Gastrocnemius medialis (tissue), 4 donors: ENCODE measurements at regions of chr21 and their contacts with region 1.

Region 1: GRCh38 chr21:34908419-34909055 is 140.6 kb downstream of the RUNX1 start:
- DNase-seq: peak in 1 of 2 donors; percentile 9
- ATAC-seq: no peak
- H3K4me3 ChIP-seq: no peak overlapping the region
- H3K27ac ChIP-seq: no peak overlapping the region
- H3K4me1 ChIP-seq: no peaks in the 10 kb centered on the region
- H3K27me3 ChIP-seq: no peaks in the 10 kb centered on the region
- CTCF ChIP-seq: no peak
- POLR2A ChIP-seq: no peak

Region 2: DNA sequence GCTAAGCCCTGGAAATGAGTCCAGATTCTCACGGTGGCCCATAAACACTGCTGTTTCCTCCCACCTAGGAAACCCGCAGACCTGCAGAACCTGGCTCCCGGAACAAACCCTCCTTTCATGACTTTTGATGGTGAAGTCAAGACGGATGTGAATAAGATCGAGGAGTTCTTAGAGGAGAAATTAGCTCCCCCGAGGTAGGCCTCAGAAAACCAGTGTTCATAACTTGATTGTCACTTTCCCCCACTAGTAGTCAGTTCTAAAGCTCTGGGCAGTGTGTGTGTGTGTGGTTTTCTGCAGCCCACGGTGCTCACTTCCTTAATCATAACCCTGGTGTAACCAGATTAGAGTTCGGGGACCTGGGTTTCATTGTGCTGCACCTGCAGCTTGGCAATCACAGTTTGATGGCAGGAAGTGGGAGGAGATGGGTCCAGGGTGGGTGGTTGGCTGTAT is 200.6 kb before region 1 on chr21:
- in situ Hi-C with region 1: no loop called
- intact Hi-C with region 1: no loop called
- DNase-seq: no peak
- ATAC-seq: no peak
- H3K4me3 ChIP-seq: no peak overlapping the region
- H3K27ac ChIP-seq: no peak overlapping the region
- H3K4me1 ChIP-seq: no peaks in the 10 kb centered on the region
- H3K27me3 ChIP-seq: no peaks in the 10 kb centered on the region
- CTCF ChIP-seq: no peak
- POLR2A ChIP-seq: no peak

Region 3: DNA sequence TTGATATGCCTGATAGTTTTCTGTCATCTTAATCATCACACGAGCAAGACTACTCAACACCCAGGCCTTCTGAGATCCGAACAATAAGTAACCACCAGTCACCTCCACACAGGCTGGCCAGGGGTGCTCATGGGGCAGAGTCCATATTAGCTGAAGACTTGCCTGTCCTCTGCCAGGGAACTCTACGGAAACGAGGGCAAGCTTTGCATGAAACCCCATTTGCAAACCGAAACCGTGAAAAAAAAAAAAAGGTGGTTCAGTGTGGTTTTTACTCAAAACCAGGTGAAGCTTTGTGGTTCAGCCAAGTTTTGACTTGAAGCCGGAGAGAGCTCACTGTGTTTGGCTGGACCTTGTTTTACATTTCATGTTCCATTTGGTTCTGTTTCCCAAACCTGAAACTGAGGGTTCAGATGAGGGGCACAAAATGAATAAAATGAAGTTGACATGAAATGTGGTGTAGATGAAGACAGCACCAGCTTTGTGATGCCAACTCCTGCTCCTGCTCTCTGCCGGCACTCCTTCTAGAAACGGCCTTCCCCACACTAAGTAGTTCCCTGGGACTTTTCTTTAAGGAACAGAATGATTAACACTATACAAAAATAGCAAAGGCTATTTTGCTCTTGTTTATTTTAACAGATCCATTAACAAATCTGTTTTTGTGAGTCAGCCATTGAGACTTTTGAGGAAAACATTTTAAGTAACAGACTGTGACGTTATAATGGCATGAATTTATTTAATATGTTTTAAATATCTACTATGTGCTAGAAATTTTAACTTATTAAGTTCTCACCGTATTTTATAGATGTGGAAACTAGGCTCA is 65.8 kb after region 1 on chr21:
- in situ Hi-C with region 1: loop called in 1 of 4 experiments (anchors 10 kb)
- intact Hi-C with region 1: no loop called
- DNase-seq: no peak
- ATAC-seq: no peak
- H3K4me3 ChIP-seq: no peak overlapping the region
- H3K27ac ChIP-seq: no peak overlapping the region
- H3K4me1 ChIP-seq: no peaks in the 10 kb centered on the region
- H3K27me3 ChIP-seq: no peaks in the 10 kb centered on the region
- CTCF ChIP-seq: no peak
- POLR2A ChIP-seq: no peak

Region 4: DNA sequence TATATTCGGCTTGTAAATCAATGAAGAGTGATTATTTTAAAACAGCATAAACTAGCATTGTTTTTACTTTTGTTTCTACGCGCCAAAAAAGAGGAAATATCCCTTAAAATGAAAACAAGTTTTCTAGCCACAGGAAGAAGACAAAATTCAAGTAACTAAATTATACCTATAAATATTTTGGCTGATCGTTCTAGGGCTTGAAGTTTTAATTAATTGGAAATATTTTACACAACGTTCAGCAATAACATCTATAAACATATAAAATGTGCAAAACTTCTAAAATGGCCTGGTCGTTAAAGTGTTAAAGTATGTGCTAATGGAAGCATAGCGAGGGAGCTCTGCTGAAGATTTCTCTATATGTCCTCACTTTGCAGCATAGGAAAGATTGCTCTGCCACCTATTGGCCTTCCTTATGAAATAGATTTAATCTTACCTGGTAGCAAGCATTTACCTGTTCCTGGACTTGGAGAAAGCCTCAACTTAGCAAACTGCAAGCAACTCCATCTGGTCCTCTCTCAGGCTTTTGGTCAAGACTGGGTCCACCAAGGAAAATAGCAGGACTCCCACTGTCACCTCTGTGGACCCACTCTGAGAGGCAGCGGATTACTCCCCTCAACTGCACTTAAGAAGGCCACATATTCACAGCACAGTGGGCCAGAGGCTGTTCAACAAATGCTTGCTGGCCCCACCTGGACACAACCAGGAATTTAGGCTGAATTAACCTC is 491.9 kb after region 1 on chr21:
- in situ Hi-C with region 1: loop called in 2 of 4 experiments (anchors 10 to 25 kb)
- intact Hi-C with region 1: no loop called
- DNase-seq: peak in 1 of 2 donors; percentile 8
- ATAC-seq: peak; percentile 93 to 98
- H3K4me3 ChIP-seq: no peak overlapping the region
- H3K27ac ChIP-seq: no peak overlapping the region
- H3K4me1 ChIP-seq: peaks cover 0 to 14% of the 10 kb centered on the region in 2 donors
- H3K27me3 ChIP-seq: no peaks in the 10 kb centered on the region
- CTCF ChIP-seq: peak; percentile 54 to 71 (median 59)
- POLR2A ChIP-seq: no peak

Region 5: GRCh38 chr21:35801393-35801792 is 892.9 kb after region 1 on chr21:
- in situ Hi-C with region 1: loop called in 1 of 4 experiments (anchors 25 kb)
- intact Hi-C with region 1: no loop called
- DNase-seq: no peak
- ATAC-seq: no peak
- H3K4me3 ChIP-seq: no peak overlapping the region
- H3K27ac ChIP-seq: no peak overlapping the region
- H3K4me1 ChIP-seq: no peaks in the 10 kb centered on the region
- H3K27me3 ChIP-seq: no peaks in the 10 kb centered on the region
- CTCF ChIP-seq: no peak
- POLR2A ChIP-seq: no peak